ENCODE measurements at regions of chr12 and their contacts with region 1.

Region 1: GRCh38 chr12:17778242-17778641 is 311.8 kb downstream of the RERGL start:
- DNase-seq: no peak
- H3K4me3 ChIP-seq: no peak overlapping the region
- H3K27ac ChIP-seq: no peak overlapping the region
- H3K4me1 ChIP-seq: no peaks in the 10 kb centered on the region
- H3K27me3 ChIP-seq: no peaks in the 10 kb centered on the region
- CTCF ChIP-seq: no peak

Region 2: GRCh38 chr12:17841496-17841895 is 63.3 kb after region 1 on chr12:
- intact Hi-C with region 1: no loop called
- DNase-seq: no peak
- H3K4me3 ChIP-seq: no peak overlapping the region
- H3K27ac ChIP-seq: no peak overlapping the region
- H3K4me1 ChIP-seq: no peaks in the 10 kb centered on the region
- H3K27me3 ChIP-seq: no peaks in the 10 kb centered on the region
- CTCF ChIP-seq: no peak

Region 3: DNA sequence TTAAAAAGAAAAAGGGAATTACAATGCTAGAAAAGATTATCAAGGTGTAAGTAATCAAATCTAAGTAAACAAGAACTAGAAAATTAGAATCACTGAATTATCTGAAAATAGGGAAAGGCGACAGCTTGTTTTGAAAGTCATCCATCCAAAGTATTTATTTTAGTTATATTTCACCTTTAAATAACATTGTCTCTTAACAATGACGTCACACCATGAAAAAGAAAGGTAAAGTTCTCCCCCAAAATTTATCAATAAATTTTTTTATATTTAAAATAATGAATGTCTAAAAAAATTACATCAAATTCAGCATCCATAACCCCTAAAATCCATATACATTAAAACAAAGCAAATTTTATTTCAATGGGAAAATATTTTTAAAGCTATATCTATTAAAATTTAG is 88.6 kb after region 1 on chr12:
- intact Hi-C with region 1: loop called (anchors 2 kb)
- DNase-seq: no peak
- H3K4me3 ChIP-seq: no peak overlapping the region
- H3K27ac ChIP-seq: no peak overlapping the region
- H3K4me1 ChIP-seq: no peaks in the 10 kb centered on the region
- H3K27me3 ChIP-seq: no peaks in the 10 kb centered on the region
- CTCF ChIP-seq: no peak

Region 4: DNA sequence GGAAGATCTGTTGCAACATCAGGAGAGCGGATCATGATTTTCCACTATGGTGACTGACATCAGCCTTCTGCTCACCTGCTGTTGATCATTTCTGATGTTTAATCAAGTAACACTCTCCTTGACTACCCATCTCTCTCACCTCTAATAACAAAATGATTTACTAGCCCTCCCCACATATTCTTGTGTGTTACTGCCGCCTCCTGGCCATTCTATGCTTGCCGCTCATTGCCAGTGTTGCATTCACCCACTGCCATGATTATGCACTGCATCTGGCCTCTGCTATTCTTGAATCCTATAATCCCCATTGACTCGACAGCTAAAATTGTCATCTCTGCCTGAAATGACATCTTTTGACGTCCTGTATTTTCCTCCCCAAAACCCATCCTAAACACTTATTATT is 198.0 kb after region 1 on chr12:
- intact Hi-C with region 1: no loop called
- DNase-seq: no peak
- H3K4me3 ChIP-seq: no peak overlapping the region
- H3K27ac ChIP-seq: no peak overlapping the region
- H3K4me1 ChIP-seq: no peaks in the 10 kb centered on the region
- H3K27me3 ChIP-seq: no peaks in the 10 kb centered on the region
- CTCF ChIP-seq: no peak

Region 5: DNA sequence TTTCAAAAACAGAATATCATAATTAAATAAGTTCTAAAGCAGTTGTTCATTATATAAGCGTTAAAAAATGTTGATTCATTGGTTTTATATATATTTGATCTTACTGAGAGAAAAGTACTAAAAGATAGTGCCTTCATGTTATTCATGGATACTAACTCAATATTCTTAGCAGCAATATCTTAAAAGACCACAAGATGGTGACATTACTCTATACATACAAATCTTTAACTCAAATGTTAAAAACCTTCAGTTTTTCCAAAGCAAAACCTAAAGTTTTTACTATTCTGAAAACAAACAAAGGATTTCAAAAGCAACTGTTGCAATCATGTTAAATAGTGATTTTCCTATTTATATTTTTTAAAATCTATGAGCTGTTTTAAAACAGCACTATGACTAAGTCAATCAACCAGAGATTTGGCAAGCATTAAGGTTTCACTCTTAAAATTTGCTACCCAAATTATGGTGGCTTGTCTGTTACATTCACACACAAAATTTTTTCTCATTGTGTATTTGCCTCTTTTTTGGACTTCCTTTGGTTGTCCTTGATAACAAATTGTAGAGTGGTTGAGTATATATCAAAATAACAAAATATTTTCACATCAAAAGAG is 361.9 kb after region 1 on chr12:
- intact Hi-C with region 1: no loop called
- DNase-seq: no peak
- H3K4me3 ChIP-seq: no peak overlapping the region
- H3K27ac ChIP-seq: no peak overlapping the region
- H3K4me1 ChIP-seq: no peaks in the 10 kb centered on the region
- H3K27me3 ChIP-seq: no peaks in the 10 kb centered on the region
- CTCF ChIP-seq: peak; percentile 55